ENCODE measurements at regions of chr17 and their contacts with region 1.

Region 1: GRCh38 chr17:55527540-55528118 is 16.4 kb upstream of the SMIM36 start:
- DNase-seq: peak in 1 of 2 donors; percentile 30
- H3K4me3 ChIP-seq: no peak overlapping the region
- H3K27ac ChIP-seq: no peak overlapping the region
- H3K4me1 ChIP-seq: no peaks in the 10 kb centered on the region
- H3K27me3 ChIP-seq: peaks cover 0 to 3% of the 10 kb centered on the region in 2 donors
- CTCF ChIP-seq: peak; percentile 11 to 23

Region 2: GRCh38 chr17:55717898-55718735 is 190.5 kb after region 1 on chr17:
- intact Hi-C with region 1: loop called (anchors 5 kb)
- DNase-seq: peak; percentile 84 to 87
- H3K4me3 ChIP-seq: no peak overlapping the region
- H3K27ac ChIP-seq: no peak overlapping the region
- H3K4me1 ChIP-seq: peaks cover 0 to 12% (median 4%) of the 10 kb centered on the region in 4 donors
- H3K27me3 ChIP-seq: peaks cover 0 to 2% of the 10 kb centered on the region in 2 donors
- CTCF ChIP-seq: peak; percentile 70 to 71

Region 3: GRCh38 chr17:55769623-55770000 is 242.0 kb after region 1 on chr17:
- intact Hi-C with region 1: loop called (anchors 5 kb)
- DNase-seq: peak in 1 of 2 donors; percentile 44
- H3K4me3 ChIP-seq: no peak overlapping the region
- H3K27ac ChIP-seq: no peak overlapping the region
- H3K4me1 ChIP-seq: peaks cover 0 to 3% (median 0%) of the 10 kb centered on the region in 4 donors
- H3K27me3 ChIP-seq: no peaks in the 10 kb centered on the region
- CTCF ChIP-seq: no peak

Measured in tibial artery (tissue), 4 donors.